Gastrocnemius medialis (tissue), 4 donors: ENCODE measurements at regions of chr15 and their contacts with region 1.

Region 1: GRCh38 chr15:67254238-67255175 is at the starts of genes AAGAB and IQCH:
- DNase-seq: peak; percentile 97
- ATAC-seq: peak; percentile 88 to 92
- H3K4me3 ChIP-seq: peak within 1 kb of the TSS; percentile 68 to 89 (median 84)
- H3K27ac ChIP-seq: peak within 1 kb of the TSS; percentile 90 to 96 (median 94)
- H3K4me1 ChIP-seq: peaks cover 15 to 22% of the 10 kb centered on the region in 2 donors
- H3K27me3 ChIP-seq: no peaks in the 10 kb centered on the region
- CTCF ChIP-seq: peak in 2 of 5 experiments; percentile 4 to 14
- POLR2A ChIP-seq: peak; percentile 84 to 93
- total RNA-seq, gene AAGAB: 29.4 to 39.2 (median 30.9) TPM
- total RNA-seq, gene IQCH: 0.07 to 0.65 (median 0.32) TPM

Region 2: DNA sequence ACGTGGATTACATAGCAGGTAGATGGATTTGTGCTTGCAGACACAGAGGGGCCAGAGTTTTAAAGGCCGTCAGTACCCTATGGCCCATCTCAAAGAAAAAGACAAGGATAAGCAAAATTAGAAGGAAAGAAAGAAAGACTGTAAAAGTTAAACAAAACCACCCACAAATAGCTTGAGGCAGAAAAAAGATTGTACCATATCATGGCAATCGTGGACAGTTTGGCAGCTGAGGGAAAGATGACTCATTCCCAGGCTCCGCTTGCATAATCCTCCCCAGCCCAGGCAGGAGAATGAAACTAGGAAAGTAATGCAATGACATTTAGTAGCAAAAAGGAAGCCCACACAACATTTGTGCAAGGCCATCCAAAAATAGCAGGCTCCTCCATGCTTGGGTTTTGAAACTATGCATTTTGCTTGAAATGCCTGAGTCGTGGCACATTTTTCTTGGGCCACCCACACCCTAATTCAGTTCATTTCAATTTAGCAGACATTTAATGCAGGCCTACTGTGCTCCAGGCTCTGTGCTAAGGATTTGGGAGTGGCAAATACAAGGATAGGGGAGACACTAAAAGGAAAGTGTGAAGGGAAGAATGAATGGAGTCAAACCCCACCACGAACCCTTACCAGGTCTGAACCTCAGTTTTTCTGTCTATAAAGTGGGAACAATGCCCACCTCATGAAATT is 230.1 kb before region 1 on chr15:
- in situ Hi-C with region 1: no loop called
- intact Hi-C with region 1: loop called (anchors 5 kb)
- DNase-seq: peak; percentile 74 to 89
- ATAC-seq: peak; percentile 99
- H3K4me3 ChIP-seq: no peak overlapping the region
- H3K27ac ChIP-seq: peak overlapping the region; percentile 56 to 77 (median 70)
- H3K4me1 ChIP-seq: peaks cover 29 to 31% of the 10 kb centered on the region in 2 donors
- H3K27me3 ChIP-seq: no peaks in the 10 kb centered on the region
- CTCF ChIP-seq: no peak
- POLR2A ChIP-seq: no peak

Region 3: GRCh38 chr15:67065444-67066093 is 188.9 kb before region 1 on chr15 and contains the start of gene SMAD3:
- in situ Hi-C with region 1: loop called in 1 of 4 experiments (anchors 10 kb)
- intact Hi-C with region 1: loop called (anchors 5 kb)
- DNase-seq: peak; percentile 87 to 90
- ATAC-seq: peak; percentile 61 to 71
- H3K4me3 ChIP-seq: peak within 1 kb of the TSS; percentile 71 to 98 (median 84)
- H3K27ac ChIP-seq: peak within 1 kb of the TSS; percentile 91 to 98 (median 94)
- H3K4me1 ChIP-seq: peaks cover 32 to 36% of the 10 kb centered on the region in 2 donors
- H3K27me3 ChIP-seq: no peaks in the 10 kb centered on the region
- CTCF ChIP-seq: peak in 1 of 5 experiments; percentile 4
- POLR2A ChIP-seq: peak; percentile 95 to 97
- total RNA-seq, gene SMAD3: 15.9 to 61.7 (median 26.3) TPM

Region 4: GRCh38 chr15:67146875-67147381 is 107.6 kb before region 1 on chr15:
- in situ Hi-C with region 1: loop called in 1 of 4 experiments (anchors 25 kb)
- intact Hi-C with region 1: loop called (anchors 5 kb)
- DNase-seq: no peak
- ATAC-seq: peak; percentile 19
- H3K4me3 ChIP-seq: no peak overlapping the region
- H3K27ac ChIP-seq: peak overlapping the region; percentile 77 to 81 (median 80)
- H3K4me1 ChIP-seq: peaks cover 85 to 89% of the 10 kb centered on the region in 2 donors
- H3K27me3 ChIP-seq: no peaks in the 10 kb centered on the region
- CTCF ChIP-seq: no peak
- POLR2A ChIP-seq: peak in 1 of 2 donors; percentile 14

Region 5: GRCh38 chr15:67207555-67208207 is 46.8 kb before region 1 on chr15:
- in situ Hi-C with region 1: no loop called
- intact Hi-C with region 1: loop called (anchors 5 kb)
- DNase-seq: no peak
- ATAC-seq: no peak
- H3K4me3 ChIP-seq: no peak overlapping the region
- H3K27ac ChIP-seq: peak overlapping the region in 3 of 4 donors; percentile 23 to 48 (median 36)
- H3K4me1 ChIP-seq: peaks cover 35 to 52% of the 10 kb centered on the region in 2 donors
- H3K27me3 ChIP-seq: no peaks in the 10 kb centered on the region
- CTCF ChIP-seq: no peak
- POLR2A ChIP-seq: no peak

Region 6: DNA sequence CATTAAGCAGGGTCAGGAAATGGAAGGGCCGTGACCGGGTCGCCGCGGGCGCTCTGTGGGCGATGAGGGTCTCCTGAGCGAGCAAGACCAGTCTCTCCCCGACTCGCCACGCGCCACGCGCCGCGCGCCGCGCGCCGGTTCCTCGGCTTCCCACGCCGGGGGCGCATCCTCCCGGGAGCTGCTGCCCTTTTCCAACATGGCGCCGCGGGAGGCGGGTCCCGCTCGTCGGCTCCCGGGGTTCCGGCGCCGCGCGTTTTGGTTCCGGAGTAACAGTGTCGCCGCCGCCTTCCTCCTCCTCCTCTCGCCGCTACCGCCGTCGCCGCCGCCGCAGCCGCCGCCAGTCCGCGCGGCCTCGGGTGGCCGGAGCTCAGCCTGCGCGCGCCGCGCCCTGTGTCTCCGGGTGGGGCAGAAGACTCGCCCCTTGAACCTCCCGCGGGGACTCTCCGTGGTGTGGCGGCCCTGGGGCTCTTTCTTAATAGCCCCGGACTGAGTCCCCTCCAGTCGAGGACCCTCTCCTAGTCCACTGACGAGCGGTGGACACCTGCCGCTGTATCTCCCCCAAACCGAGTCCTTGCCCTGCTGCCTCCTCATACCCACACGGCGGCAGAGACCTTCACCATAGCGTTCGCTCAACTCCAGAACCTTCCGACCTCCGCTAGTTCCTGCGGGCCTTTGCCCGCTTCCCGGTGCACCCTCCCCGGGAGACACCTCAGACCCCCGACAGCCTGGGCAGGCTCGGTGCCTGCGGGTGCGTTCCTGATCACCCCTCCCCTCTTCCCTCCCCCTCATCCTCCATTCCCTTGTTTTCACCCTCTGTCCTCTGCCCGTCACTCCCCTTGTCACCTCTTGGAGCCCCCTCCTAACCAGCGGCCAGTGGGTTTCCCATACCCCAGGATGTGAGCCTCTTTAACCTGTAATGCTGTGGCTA is 288.2 kb after region 1 on chr15 and contains the start of gene MAP2K5:
- in situ Hi-C with region 1: no loop called
- intact Hi-C with region 1: loop called (anchors 10 kb)
- DNase-seq: peak; percentile 74 to 79
- ATAC-seq: peak; percentile 86 to 89
- H3K4me3 ChIP-seq: peak within 1 kb of the TSS; percentile 66 to 90 (median 78)
- H3K27ac ChIP-seq: peak within 1 kb of the TSS; percentile 86 to 93 (median 88)
- H3K4me1 ChIP-seq: peaks cover 10 to 19% of the 10 kb centered on the region in 2 donors
- H3K27me3 ChIP-seq: no peaks in the 10 kb centered on the region
- CTCF ChIP-seq: no peak
- POLR2A ChIP-seq: peak; percentile 78 to 79
- total RNA-seq, gene MAP2K5: 5.9 to 6.8 (median 6.4) TPM